Activated naive CD4-positive, alpha-beta T cell treated with anti-CD3 and anti-CD28 coated beads for 36 hours (primary cell): ENCODE measurements at regions of chrX and their contacts with region 1.

Region 1: DNA sequence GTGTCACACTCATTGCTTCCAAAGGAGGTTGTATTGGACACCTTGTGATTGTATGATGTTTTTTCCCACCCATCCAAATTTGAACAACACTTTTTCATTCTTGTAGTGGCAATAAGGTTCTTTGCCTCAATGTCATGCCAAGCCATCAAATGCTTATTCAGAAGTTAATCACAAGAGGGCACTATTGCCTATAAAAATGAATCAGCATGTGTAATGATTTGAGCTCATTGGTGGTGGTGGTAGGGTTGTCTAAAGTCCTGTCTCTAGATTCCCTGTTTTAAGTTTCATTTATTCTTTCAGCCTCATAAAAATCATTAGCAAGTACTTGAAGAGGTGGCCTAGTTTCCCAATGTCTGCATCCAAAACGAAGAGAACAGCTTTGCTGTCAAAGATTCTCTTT is 37.0 kb downstream of the IRS4 start:
- DNase-seq: no peak
- H3K4me3 Mint-ChIP-seq: no peak overlapping the region
- H3K27ac Mint-ChIP-seq: no peak overlapping the region
- H3K4me1 Mint-ChIP-seq: no peaks in the 10 kb centered on the region
- H3K27me3 Mint-ChIP-seq: no peaks in the 10 kb centered on the region

Region 2: GRCh38 chrX:108732630-108733321 is 33.4 kb after region 1 on chrX:
- CTCF ChIA-PET with region 1: no interaction called
- intact Hi-C with region 1: no loop called
- DNase-seq: no peak
- H3K4me3 Mint-ChIP-seq: no peak overlapping the region
- H3K27ac Mint-ChIP-seq: no peak overlapping the region
- H3K4me1 Mint-ChIP-seq: no peaks in the 10 kb centered on the region
- H3K27me3 Mint-ChIP-seq: peaks cover 36% of the 10 kb centered on the region

Region 3: GRCh38 chrX:109384699-109385098 is 685.3 kb after region 1 on chrX:
- CTCF ChIA-PET with region 1: no interaction called
- intact Hi-C with region 1: loop called (anchors 5 kb)
- DNase-seq: no peak
- H3K4me3 Mint-ChIP-seq: no peak overlapping the region
- H3K27ac Mint-ChIP-seq: no peak overlapping the region
- H3K4me1 Mint-ChIP-seq: no peaks in the 10 kb centered on the region
- H3K27me3 Mint-ChIP-seq: no peaks in the 10 kb centered on the region

Region 4: GRCh38 chrX:109475174-109475891 is 776.0 kb after region 1 on chrX:
- CTCF ChIA-PET with region 1: interaction called, 3 read pairs
- intact Hi-C with region 1: loop called (anchors 2 kb)
- DNase-seq: peak; percentile 34
- H3K4me3 Mint-ChIP-seq: no peak overlapping the region
- H3K27ac Mint-ChIP-seq: no peak overlapping the region
- H3K4me1 Mint-ChIP-seq: peaks cover 7% of the 10 kb centered on the region
- H3K27me3 Mint-ChIP-seq: no peaks in the 10 kb centered on the region